Right ventricle myocardium inferior (tissue), 1 donor: ENCODE measurements at regions of chr12 and their contacts with region 1.

Region 1: GRCh38 chr12:110893956-110894355 is 26.4 kb downstream of the MYL2 start:
- DNase-seq: no peak
- ATAC-seq: no peak

Region 2: GRCh38 chr12:110937104-110937641 is 43.2 kb after region 1 on chr12:
- intact Hi-C with region 1: loop called (anchors 2 kb)
- DNase-seq: peak; percentile 78
- ATAC-seq: peak; percentile 53